Caco-2 (cell line): ENCODE measurements at regions of chr12 and their contacts with region 1.

Region 1: GRCh38 chr12:44015335-44015941 is 179.6 kb downstream of the TMEM117 start:
- DNase-seq: peak in 1 of 2 experiments; percentile 62
- H3K4me3 ChIP-seq: no peak overlapping the region
- H3K4me3 Mint-ChIP-seq: no peak overlapping the region
- H3K27ac Mint-ChIP-seq: no peak overlapping the region
- H3K4me1 ChIP-seq: peaks cover 7% of the 10 kb centered on the region
- H3K4me1 Mint-ChIP-seq: peaks cover 13% of the 10 kb centered on the region
- H3K27me3 ChIP-seq: no peaks in the 10 kb centered on the region
- H3K27me3 Mint-ChIP-seq: no peaks in the 10 kb centered on the region
- CTCF ChIP-seq: peak; percentile 62 to 72

Region 2: DNA sequence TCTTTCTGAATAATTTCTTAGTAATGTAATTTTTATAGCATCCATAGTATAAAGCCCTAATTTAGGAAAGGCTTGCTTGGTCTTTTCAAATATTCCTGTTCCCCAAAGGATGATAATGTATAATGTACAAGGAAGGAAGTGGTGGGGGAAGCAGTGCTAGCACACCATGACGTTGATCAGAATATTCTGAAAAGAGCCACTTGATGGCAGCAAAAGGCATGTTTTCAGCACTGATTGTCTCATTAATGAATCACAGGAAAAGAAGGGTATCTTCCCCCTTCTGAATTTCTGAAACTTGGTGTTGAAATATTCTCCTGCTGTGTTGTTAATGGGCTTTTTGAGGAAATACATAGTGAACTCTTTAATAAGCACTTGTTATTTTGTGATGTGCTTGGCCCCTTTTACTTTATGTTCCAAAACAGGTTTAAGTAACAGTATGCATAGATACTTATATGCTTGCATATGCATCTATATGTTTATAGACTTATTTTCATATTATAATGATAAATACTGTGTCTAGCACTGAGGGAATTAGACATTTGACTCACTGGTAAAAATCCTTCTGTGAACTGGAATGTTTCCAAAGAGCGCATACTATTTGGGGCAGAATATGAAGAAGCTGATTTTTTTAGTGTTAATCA is 57.6 kb before region 1 on chr12:
- CTCF ChIA-PET with region 1: interaction called, 5 read pairs
- POLR2A ChIA-PET with region 1: no interaction called
- intact Hi-C with region 1: loop called (anchors 1 kb)
- DNase-seq: peak in 1 of 2 experiments; percentile 66
- H3K4me3 ChIP-seq: no peak overlapping the region
- H3K4me3 Mint-ChIP-seq: no peak overlapping the region
- H3K27ac Mint-ChIP-seq: no peak overlapping the region
- H3K4me1 ChIP-seq: no peaks in the 10 kb centered on the region; the same call in 1 of the 2 replicates
- H3K4me1 Mint-ChIP-seq: peaks cover 6% of the 10 kb centered on the region
- H3K27me3 ChIP-seq: no peaks in the 10 kb centered on the region
- H3K27me3 Mint-ChIP-seq: no peaks in the 10 kb centered on the region
- CTCF ChIP-seq: peak; percentile 56 to 69

Region 3: GRCh38 chr12:43988838-43989560 is 26.4 kb before region 1 on chr12:
- CTCF ChIA-PET with region 1: no interaction called
- POLR2A ChIA-PET with region 1: no interaction called
- intact Hi-C with region 1: no loop called
- DNase-seq: no peak
- H3K4me3 ChIP-seq: no peak overlapping the region
- H3K4me3 Mint-ChIP-seq: no peak overlapping the region
- H3K27ac Mint-ChIP-seq: no peak overlapping the region
- H3K4me1 ChIP-seq: no peaks in the 10 kb centered on the region
- H3K4me1 Mint-ChIP-seq: no peaks in the 10 kb centered on the region
- H3K27me3 ChIP-seq: no peaks in the 10 kb centered on the region
- H3K27me3 Mint-ChIP-seq: no peaks in the 10 kb centered on the region
- CTCF ChIP-seq: no peak

Region 4: DNA sequence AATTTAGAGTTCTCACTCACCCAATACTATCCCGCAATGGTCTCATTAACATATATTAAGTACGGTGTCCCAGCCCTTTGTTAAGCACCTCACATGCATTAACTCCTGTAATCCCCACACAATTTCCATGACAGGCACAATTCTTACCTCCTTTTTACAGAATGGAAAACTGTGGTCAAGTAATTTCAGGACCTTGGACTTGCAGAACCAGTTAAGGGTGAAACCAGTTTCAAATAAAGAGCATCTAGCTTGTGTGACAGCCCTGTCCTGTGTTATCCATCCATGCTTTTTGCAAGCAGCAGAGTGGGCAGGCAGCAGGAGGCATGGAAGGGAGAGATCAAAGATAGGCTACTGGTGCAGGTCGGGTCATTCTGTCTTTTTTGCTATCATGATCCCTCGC is 389.9 kb after region 1 on chr12:
- CTCF ChIA-PET with region 1: no interaction called
- POLR2A ChIA-PET with region 1: no interaction called
- intact Hi-C with region 1: loop called (anchors 10 kb)
- DNase-seq: no peak
- H3K4me3 ChIP-seq: no peak overlapping the region
- H3K4me3 Mint-ChIP-seq: no peak overlapping the region
- H3K27ac Mint-ChIP-seq: no peak overlapping the region
- H3K4me1 ChIP-seq: peaks cover 11% of the 10 kb centered on the region
- H3K4me1 Mint-ChIP-seq: peaks cover 10% of the 10 kb centered on the region
- H3K27me3 ChIP-seq: no peaks in the 10 kb centered on the region; the same call in 1 of the 2 replicates
- H3K27me3 Mint-ChIP-seq: peaks cover 4% of the 10 kb centered on the region
- CTCF ChIP-seq: no peak

Region 5: GRCh38 chr12:44875954-44876553 is 860.6 kb after region 1 on chr12 and contains the start of gene NELL2:
- CTCF ChIA-PET with region 1: no interaction called
- POLR2A ChIA-PET with region 1: no interaction called
- intact Hi-C with region 1: loop called (anchors 5 kb)
- DNase-seq: peak; percentile 45 to 59
- H3K4me3 ChIP-seq: peak within 1 kb of the TSS; percentile 36
- H3K4me3 Mint-ChIP-seq: peak within 1 kb of the TSS; percentile 72
- H3K27ac Mint-ChIP-seq: no peak within 1 kb of the TSS
- H3K4me1 ChIP-seq: no peaks in the 10 kb centered on the region; the same call in none of the 2 replicates
- H3K4me1 Mint-ChIP-seq: peaks cover 19% of the 10 kb centered on the region
- H3K27me3 ChIP-seq: peaks cover 10% of the 10 kb centered on the region
- H3K27me3 Mint-ChIP-seq: peaks cover 23% of the 10 kb centered on the region
- CTCF ChIP-seq: no peak
- total RNA-seq, gene NELL2: 0.70 and 0.81 TPM in 2 replicates

Region 6: DNA sequence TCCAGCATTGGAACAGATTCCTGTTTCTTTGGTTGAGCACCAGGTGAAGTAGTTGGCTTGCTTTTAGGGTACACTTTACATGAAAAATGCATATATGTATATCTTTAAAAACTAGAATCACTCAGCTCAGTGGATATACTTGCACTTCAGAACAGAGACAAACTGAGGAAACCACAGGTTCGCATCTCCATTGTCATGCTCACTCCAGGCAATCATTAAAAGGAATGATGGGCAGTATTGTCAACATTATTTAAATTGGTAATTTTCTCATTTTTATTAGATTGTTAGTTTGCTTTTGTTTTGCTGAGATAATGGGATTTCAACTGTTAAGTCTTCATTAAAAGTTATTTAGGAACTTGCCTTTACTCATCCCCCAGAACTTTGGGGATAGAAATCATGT is 931.7 kb after region 1 on chr12:
- CTCF ChIA-PET with region 1: no interaction called
- POLR2A ChIA-PET with region 1: no interaction called
- intact Hi-C with region 1: loop called (anchors 5 kb)
- DNase-seq: no peak
- H3K4me3 ChIP-seq: no peak overlapping the region
- H3K4me3 Mint-ChIP-seq: no peak overlapping the region
- H3K27ac Mint-ChIP-seq: no peak overlapping the region
- H3K4me1 ChIP-seq: peaks cover 10% of the 10 kb centered on the region; the same call in 1 of the 2 replicates
- H3K4me1 Mint-ChIP-seq: peaks cover 9% of the 10 kb centered on the region
- H3K27me3 ChIP-seq: no peaks in the 10 kb centered on the region
- H3K27me3 Mint-ChIP-seq: peaks cover 5% of the 10 kb centered on the region
- CTCF ChIP-seq: no peak